CD4-positive, alpha-beta T cell (primary cell): ENCODE measurements at regions of chr13 and their contacts with region 1.

Region 1: DNA sequence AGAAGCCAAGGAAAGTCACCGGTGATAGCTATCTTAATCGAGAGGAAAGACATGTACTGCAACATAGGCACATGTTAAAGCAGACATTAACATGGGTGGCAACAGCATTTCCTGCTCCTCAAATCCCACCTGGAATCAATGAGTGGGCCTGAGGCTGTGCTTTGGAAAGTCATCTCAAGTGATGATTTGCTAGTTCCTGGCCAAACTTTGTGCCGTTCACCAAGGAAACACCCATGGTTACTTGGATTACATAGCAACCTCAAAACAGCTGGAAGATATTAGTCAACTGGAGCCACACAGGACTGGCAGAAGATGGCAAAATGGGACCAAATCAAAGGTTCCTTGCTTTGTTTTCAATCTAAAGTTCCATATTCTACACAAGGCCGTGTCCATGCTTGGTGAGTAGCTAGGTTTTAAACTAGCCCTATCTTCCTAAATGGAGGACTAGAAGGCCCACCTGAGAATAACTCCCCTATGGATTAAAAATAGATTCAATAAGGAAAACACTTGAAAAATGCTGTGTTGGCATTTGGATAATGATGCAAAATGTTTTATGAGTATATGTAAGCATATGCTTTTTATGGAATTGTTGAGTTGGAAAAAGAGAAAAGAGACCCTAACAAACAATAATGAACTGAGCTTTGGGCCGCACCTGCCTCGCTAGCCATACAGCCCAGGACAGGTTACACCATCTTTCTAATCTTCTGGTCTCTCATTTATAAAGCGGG is 144.5 kb downstream of the RGCC start:
- DNase-seq: no peak
- ATAC-seq: no peak
- H3K4me3 ChIP-seq: no peak overlapping the region
- H3K4me3 Mint-ChIP-seq: no peak overlapping the region
- H3K27ac ChIP-seq: no peak overlapping the region
- H3K27ac Mint-ChIP-seq: no peak overlapping the region
- H3K4me1 ChIP-seq: no peaks in the 10 kb centered on the region
- H3K4me1 Mint-ChIP-seq: peaks cover 16% of the 10 kb centered on the region
- H3K27me3 ChIP-seq: no peaks in the 10 kb centered on the region
- H3K27me3 Mint-ChIP-seq: no peaks in the 10 kb centered on the region
- CTCF ChIP-seq: no peak

Region 2: DNA sequence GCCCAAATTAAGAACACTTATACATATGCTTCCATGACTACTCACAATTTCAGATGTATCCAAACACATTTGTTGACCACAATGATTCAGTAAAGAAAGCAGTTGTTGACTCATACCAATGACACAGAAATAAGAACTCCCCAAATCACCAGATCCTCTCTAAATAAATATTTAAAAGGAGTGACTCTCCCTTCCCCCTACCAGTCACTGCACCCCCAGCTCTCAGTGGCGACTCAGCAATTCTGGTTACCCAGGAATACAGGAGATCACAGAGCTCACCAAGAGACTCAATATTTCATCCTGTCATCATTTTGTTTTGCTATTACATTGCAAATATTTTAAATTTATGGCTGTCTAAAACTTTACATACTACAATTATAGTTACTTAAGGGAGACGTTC is 13.0 kb before region 1 on chr13:
- CTCF ChIA-PET with region 1: no interaction called
- POLR2A ChIA-PET with region 1: no interaction called
- intact Hi-C with region 1: loop called in 1 of 2 experiments (anchors 1 kb)
- DNase-seq: peak in 3 of 14 experiments; percentile 15 to 52 (median 39)
- ATAC-seq: no peak
- H3K4me3 ChIP-seq: no peak overlapping the region
- H3K4me3 Mint-ChIP-seq: no peak overlapping the region
- H3K27ac ChIP-seq: no peak overlapping the region
- H3K27ac Mint-ChIP-seq: no peak overlapping the region
- H3K4me1 ChIP-seq: peaks cover 3% of the 10 kb centered on the region
- H3K4me1 Mint-ChIP-seq: no peaks in the 10 kb centered on the region
- H3K27me3 ChIP-seq: no peaks in the 10 kb centered on the region
- H3K27me3 Mint-ChIP-seq: no peaks in the 10 kb centered on the region
- CTCF ChIP-seq: no peak